ENCODE measurements at regions of chr9 and their contacts with region 1.

Region 1: DNA sequence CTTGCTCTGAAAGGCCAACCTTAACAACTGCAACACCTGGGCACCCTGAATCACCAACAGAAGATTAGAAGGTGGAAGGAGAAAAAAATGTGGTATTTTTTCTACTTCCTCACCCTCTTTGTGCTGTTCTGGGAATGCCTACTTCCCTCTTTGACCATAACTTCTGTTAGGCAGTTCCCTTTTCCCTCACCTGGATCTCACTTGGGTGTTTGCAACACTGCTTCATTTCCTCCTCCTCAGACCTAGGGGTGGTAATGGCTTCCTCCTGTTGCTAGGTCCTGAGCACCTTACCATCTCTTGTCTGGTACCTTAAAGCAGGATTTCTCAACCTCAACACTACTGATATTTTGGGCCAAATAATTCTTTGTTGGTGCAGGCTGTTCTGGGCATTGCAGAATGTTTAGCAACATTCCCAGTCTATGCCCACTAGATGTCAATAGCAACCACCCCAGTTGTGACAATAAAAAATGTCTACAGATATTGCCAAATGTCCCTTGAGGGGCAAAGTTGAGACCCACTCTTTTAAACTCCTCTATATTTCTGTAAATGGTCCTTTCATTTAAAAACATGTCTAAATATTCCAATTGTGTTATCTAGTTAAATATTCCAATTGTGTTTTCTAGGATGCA is 299.9 kb upstream of the VLDLR start:
- DNase-seq: peak; percentile 20
- H3K4me3 ChIP-seq: no peak overlapping the region
- H3K27ac ChIP-seq: no peak overlapping the region
- H3K4me1 ChIP-seq: peaks cover 18% of the 10 kb centered on the region
- H3K27me3 ChIP-seq: no peaks in the 10 kb centered on the region

Region 2: GRCh38 chr9:1907465-1907864 is 414.2 kb before region 1 on chr9:
- in situ Hi-C with region 1: no loop called
- DNase-seq: no peak
- H3K4me3 ChIP-seq: no peak overlapping the region
- H3K27ac ChIP-seq: no peak overlapping the region
- H3K4me1 ChIP-seq: no peaks in the 10 kb centered on the region
- H3K27me3 ChIP-seq: no peaks in the 10 kb centered on the region

Region 3: GRCh38 chr9:1917396-1917935 is 404.2 kb before region 1 on chr9:
- in situ Hi-C with region 1: no loop called
- DNase-seq: no peak
- H3K4me3 ChIP-seq: no peak overlapping the region
- H3K27ac ChIP-seq: no peak overlapping the region
- H3K4me1 ChIP-seq: no peaks in the 10 kb centered on the region; the same call in 1 of the 2 replicates
- H3K27me3 ChIP-seq: peaks cover 38% of the 10 kb centered on the region

Region 4: GRCh38 chr9:2389404-2389803 is 67.8 kb after region 1 on chr9:
- in situ Hi-C with region 1: loop called (anchors 10 kb)
- DNase-seq: peak; percentile 18
- H3K4me3 ChIP-seq: no peak overlapping the region
- H3K27ac ChIP-seq: no peak overlapping the region
- H3K4me1 ChIP-seq: no peaks in the 10 kb centered on the region
- H3K27me3 ChIP-seq: no peaks in the 10 kb centered on the region; the same call in 1 of the 2 replicates